PC-3 (cell line): ENCODE measurements at regions of chr3 and their contacts with region 1.

Region 1: DNA sequence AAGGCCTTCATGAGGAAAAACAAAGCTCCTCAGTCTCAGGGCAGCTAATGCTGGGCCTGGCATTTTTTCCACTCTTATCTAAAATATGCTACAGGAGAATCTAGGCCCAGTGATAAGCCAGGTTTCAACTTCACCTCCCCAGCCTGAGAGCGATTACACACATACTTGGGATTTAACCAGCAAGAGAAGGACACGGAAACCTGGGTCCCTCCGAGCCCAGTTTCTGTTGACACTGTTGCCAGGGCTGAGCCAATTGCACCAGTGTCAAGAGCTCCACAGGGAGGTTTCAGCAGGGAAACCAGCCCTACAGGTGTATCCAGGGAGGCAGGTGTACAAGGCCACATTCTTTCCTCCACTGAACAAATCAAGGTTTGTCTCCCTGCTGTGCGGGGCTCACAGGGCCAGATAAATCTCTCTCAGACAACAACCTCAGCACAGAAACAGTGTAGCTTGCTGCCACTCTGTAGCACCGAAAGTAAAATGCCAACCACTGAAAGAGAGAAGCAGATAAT is 85.4 kb downstream of the MAGI1 start:
- DNase-seq: peak; percentile 77
- ATAC-seq: peak; percentile 33
- H3K4me3 ChIP-seq: peak overlapping the region; percentile 30; the same call in 1 of the 2 replicates
- H3K27ac ChIP-seq: peak overlapping the region; percentile 90
- H3K4me1 ChIP-seq: peaks cover 58% of the 10 kb centered on the region
- H3K27me3 ChIP-seq: no peaks in the 10 kb centered on the region
- CTCF ChIP-seq: no peak

Region 2: DNA sequence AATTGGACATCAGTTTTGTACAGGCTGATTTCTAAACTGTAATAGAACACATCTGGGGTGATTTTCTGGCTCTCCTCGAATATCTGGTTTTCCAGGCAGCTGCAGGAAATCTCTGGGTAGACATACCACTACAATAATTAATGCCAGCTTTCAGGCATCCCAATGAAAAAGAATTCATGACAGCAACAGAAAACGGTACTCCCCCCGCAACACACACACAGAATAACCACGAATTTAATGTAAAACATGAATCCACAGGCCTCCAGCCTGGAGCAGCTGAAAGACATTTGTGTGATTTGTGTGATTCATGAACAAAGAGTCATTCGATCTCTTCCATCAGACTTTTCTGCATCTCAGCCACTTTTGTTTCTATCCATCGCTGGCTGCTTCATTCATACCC is 176.9 kb before region 1 on chr3:
- CTCF ChIA-PET with region 1: no interaction called
- POLR2A ChIA-PET with region 1: no interaction called
- intact Hi-C with region 1: no loop called
- DNase-seq: no peak
- ATAC-seq: no peak
- H3K4me3 ChIP-seq: no peak overlapping the region
- H3K27ac ChIP-seq: no peak overlapping the region
- H3K4me1 ChIP-seq: peaks cover 5% of the 10 kb centered on the region; the same call in 1 of the 2 replicates
- H3K27me3 ChIP-seq: no peaks in the 10 kb centered on the region
- CTCF ChIP-seq: no peak

Region 3: GRCh38 chr3:66038726-66039589 is 85.6 kb after region 1 on chr3 and contains the start of gene MAGI1:
- CTCF ChIA-PET with region 1: no interaction called
- POLR2A ChIA-PET with region 1: no interaction called
- intact Hi-C with region 1: loop called (anchors 2 kb)
- DNase-seq: peak; percentile 85
- ATAC-seq: peak; percentile 83
- H3K4me3 ChIP-seq: peak within 1 kb of the TSS; percentile 84
- H3K27ac ChIP-seq: peak within 1 kb of the TSS; percentile 67
- H3K4me1 ChIP-seq: peaks cover 6% of the 10 kb centered on the region; the same call in 1 of the 2 replicates
- H3K27me3 ChIP-seq: no peaks in the 10 kb centered on the region
- CTCF ChIP-seq: no peak
- total RNA-seq, gene MAGI1: 8.9 and 12.7 TPM in 2 replicates

Region 4: GRCh38 chr3:66115858-66116654 is 162.7 kb after region 1 on chr3:
- CTCF ChIA-PET with region 1: no interaction called
- POLR2A ChIA-PET with region 1: no interaction called
- intact Hi-C with region 1: loop called (anchors 5 kb)
- DNase-seq: peak; percentile 83
- ATAC-seq: peak; percentile 97
- H3K4me3 ChIP-seq: no peak overlapping the region
- H3K27ac ChIP-seq: peak overlapping the region; percentile 63
- H3K4me1 ChIP-seq: peaks cover 14% of the 10 kb centered on the region
- H3K27me3 ChIP-seq: no peaks in the 10 kb centered on the region
- CTCF ChIP-seq: no peak